SK-N-SH (cell line): ENCODE measurements at regions of chr12 and their contacts with region 1.

Region 1: DNA sequence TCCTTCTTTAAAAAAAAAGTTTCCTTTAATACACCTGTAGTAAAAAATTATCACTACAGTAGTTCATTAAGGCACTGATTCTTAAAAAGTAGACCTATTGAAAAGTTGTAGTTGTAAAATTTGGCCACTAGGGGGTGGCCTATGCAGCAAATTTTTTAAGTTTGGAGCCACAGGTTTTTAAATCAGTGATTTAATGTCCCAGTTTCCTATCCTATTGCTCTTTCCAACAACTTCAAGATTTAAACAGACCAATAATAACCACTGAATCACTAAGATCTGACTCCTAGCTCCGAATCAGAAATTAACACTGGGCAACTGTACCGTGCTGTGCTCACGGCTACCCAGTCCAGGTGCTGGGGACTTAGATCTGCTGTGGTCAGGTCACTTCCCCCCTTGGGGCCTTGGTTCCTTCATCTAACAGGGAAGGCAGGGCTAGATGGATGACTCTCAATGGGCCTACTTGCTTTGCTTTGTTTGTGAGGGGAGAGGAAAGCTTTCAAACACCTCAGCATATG is 279.3 kb downstream of the MED13L start:
- DNase-seq: peak; percentile 27
- H3K4me3 ChIP-seq: peak overlapping the region in 1 of 2 experiments; percentile 20; a peak in 1 of 4 replicates
- H3K27ac ChIP-seq: peak overlapping the region in 1 of 2 experiments; percentile 20; a peak in 2 of 4 replicates
- H3K4me1 ChIP-seq: 0 out of 4 replicates have a peak, but pooled peaks cover 0 to 5% of the 10 kb centered on the region in 2 experiments
- H3K27me3 ChIP-seq: no peaks in the 10 kb centered on the region
- CTCF ChIP-seq: peak; percentile 89
- EP300 ChIP-seq: no peak
- RAD21 ChIP-seq: peak; percentile 75

Region 2: DNA sequence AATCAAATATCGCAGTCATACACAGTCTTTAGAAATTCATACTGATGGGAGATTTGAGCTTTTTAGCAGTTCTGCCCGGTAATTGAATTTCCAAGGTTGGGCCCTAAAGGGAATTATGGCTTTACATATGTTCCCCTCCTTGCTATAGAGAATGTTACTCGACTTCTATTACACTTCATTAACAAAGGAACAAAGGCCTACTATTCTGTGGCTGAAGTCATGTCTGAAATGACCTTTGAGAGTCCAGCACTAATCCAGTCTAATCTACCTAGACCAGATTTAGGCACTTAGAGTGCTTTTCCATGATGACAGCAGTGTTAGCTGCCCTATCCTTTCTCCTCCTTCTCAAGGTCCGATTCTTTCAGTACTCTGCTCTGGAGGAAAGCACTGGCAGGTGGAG is 25.9 kb before region 1 on chr12:
- CTCF ChIA-PET with region 1: interaction called, 12 read pairs
- POLR2A ChIA-PET with region 1: no interaction called
- DNase-seq: no peak
- H3K4me3 ChIP-seq: no peak overlapping the region
- H3K27ac ChIP-seq: no peak overlapping the region
- H3K4me1 ChIP-seq: no peaks in the 10 kb centered on the region
- H3K27me3 ChIP-seq: no peaks in the 10 kb centered on the region
- CTCF ChIP-seq: no peak
- EP300 ChIP-seq: no peak
- RAD21 ChIP-seq: no peak

Region 3: GRCh38 chr12:115983226-115983798 is 14.9 kb before region 1 on chr12:
- CTCF ChIA-PET with region 1: interaction called, 26 read pairs
- POLR2A ChIA-PET with region 1: no interaction called
- DNase-seq: no peak
- H3K4me3 ChIP-seq: no peak overlapping the region
- H3K27ac ChIP-seq: no peak overlapping the region
- H3K4me1 ChIP-seq: no peaks in the 10 kb centered on the region; a peak in 2 of 4 replicates
- H3K27me3 ChIP-seq: no peaks in the 10 kb centered on the region
- CTCF ChIP-seq: peak; percentile 39; the same call in 1 of the 2 replicates
- EP300 ChIP-seq: no peak
- RAD21 ChIP-seq: peak; percentile 23; the same call in 1 of the 2 replicates

Region 4: GRCh38 chr12:116080415-116080814 is 82.2 kb after region 1 on chr12:
- CTCF ChIA-PET with region 1: no interaction called
- POLR2A ChIA-PET with region 1: no interaction called
- DNase-seq: no peak
- H3K4me3 ChIP-seq: no peak overlapping the region
- H3K27ac ChIP-seq: no peak overlapping the region
- H3K4me1 ChIP-seq: no peaks in the 10 kb centered on the region
- H3K27me3 ChIP-seq: no peaks in the 10 kb centered on the region
- CTCF ChIP-seq: no peak
- EP300 ChIP-seq: no peak
- RAD21 ChIP-seq: no peak

Region 5: GRCh38 chr12:116099652-116100432 is 101.7 kb after region 1 on chr12:
- CTCF ChIA-PET with region 1: no interaction called
- POLR2A ChIA-PET with region 1: no interaction called
- DNase-seq: no peak
- H3K4me3 ChIP-seq: no peak overlapping the region
- H3K27ac ChIP-seq: no peak overlapping the region
- H3K4me1 ChIP-seq: peaks cover 3 to 7% of the 10 kb centered on the region in 2 experiments; a peak in 3 of 4 replicates
- H3K27me3 ChIP-seq: no peaks in the 10 kb centered on the region
- CTCF ChIP-seq: no peak
- EP300 ChIP-seq: no peak
- RAD21 ChIP-seq: no peak

Region 6: DNA sequence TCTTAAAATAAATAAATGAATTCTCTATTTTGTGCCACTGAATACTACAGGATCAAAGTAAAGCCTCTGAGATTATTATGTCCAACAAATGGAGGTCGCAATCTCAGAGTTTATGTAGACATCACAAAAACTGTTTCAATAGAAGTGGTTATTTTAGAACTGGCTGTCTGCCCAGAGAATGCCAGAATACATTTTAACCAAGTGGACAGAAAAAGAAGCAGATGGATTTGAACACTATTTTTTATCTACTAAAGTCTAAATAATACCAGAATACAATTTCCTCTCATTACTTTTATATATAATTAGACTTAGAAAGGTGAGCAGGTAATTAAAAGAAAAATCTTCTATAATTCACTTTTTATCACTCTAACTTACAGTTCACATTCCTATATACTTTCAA is 161.0 kb after region 1 on chr12:
- CTCF ChIA-PET with region 1: no interaction called
- POLR2A ChIA-PET with region 1: no interaction called
- DNase-seq: no peak
- H3K4me3 ChIP-seq: no peak overlapping the region
- H3K27ac ChIP-seq: peak overlapping the region; percentile 67; a peak in 3 of 4 replicates
- H3K4me1 ChIP-seq: peaks cover 36 to 37% of the 10 kb centered on the region in 2 experiments; a peak in 3 of 4 replicates
- H3K27me3 ChIP-seq: no peaks in the 10 kb centered on the region
- CTCF ChIP-seq: no peak
- EP300 ChIP-seq: peak; percentile 48 to 73; a peak in 3 of 4 replicates
- RAD21 ChIP-seq: no peak